Mammary epithelial cell (primary cell): ENCODE measurements at regions of chr12 and their contacts with region 1.

Region 1: DNA sequence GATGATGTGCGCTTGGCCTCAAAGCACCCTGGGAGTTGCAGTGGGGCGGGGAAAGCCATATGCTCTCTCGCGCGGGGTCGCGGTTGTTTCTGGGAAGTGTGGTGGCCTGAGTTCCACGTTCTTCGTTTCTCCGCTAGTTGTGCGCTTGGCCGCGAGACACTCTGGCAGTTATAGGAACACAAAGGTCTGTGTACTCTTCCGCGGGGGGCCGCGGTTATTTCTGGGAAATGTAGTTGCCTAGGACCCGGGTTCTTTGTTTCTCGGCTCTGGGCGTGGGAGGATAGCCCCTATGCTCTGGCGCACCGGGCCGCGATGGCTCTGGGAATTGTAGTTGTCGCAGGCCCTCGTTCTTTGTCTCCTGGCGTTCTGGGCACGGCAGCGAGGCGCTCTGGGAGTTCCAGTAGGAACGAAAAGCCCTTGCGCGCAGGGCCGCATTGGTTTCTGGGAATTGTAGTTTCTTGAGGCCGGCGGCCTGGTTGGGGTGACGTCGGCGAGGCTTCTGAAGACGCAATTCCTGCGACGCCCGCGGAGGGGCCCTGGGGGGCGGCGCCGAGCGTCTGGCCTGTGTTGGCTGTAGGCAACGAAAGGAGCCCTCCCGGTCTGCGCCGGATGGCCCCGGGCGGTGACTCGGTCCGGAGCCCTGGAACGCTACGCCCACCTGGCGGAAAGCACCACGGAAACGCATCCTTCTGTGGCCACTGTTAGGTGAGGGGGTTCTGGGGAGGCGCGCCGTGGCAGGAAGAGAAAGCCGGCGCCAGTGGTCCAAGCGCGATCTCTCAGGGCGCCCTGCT is at the start of gene ZNF140:
- DNase-seq: peak; percentile 94
- H3K4me3 ChIP-seq: peak within 1 kb of the TSS; percentile 64 to 100 (median 72)
- H3K27ac ChIP-seq: peak within 1 kb of the TSS; percentile 86
- H3K4me1 ChIP-seq: peaks cover 5% of the 10 kb centered on the region
- H3K27me3 ChIP-seq: no peaks in the 10 kb centered on the region
- CTCF ChIP-seq: peak in 1 of 2 donors; percentile 33
- total RNA-seq, gene ZNF140: 15.7 to 31.3 TPM

Region 2: DNA sequence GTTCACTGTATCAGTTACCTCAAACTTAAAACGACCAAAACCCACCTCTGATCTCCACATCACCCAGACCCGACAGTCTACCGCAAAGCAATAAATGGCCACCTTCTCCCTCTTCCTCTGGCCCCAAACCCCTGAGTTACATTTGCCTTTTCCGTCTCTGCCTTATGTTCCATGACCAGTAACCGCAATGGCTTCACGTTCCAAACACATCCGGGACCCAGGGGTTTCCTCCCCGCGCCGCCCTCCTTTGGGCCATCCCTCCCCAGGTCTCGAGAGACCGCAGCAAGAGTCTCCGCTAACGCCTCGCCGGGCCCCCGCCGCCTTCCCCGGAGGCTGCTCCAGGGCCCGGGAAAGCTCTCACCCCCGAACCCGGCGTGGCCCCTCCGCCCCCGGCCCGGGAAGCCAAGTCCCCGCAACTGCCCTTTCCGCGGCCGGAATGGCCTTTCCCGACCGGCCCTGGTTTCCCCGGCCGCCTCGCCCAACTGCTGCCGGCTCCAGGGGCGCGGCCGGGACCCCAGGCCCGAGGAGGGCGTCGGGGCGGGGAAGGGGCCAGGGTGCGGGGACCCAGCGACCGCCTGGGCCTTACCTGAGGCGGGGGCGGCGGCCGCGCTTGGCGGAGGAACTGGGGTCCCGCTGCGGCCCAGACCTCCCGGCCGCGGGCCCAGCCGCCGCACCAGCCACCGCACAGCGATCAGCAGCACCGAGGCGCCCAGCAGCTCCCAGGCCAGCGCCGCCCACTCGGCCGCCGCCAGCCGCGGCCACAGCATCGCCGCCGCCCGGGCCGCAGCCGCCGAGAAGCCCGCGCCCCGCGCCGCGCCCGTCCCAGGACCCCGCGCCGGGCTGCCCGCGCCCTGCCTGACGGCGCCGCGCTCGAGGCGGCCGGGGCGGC is 319.3 kb before region 1 on chr12 and contains the start of gene ANKLE2:
- CTCF ChIA-PET with region 1: no interaction called
- dilution Hi-C with region 1: no loop called
- in situ Hi-C with region 1: no loop called
- intact Hi-C with region 1: loop called (anchors 1 kb)
- DNase-seq: peak; percentile 61
- H3K4me3 ChIP-seq: peak within 1 kb of the TSS; percentile 83 to 96 (median 94)
- H3K27ac ChIP-seq: peak within 1 kb of the TSS; percentile 100
- H3K4me1 ChIP-seq: peaks cover 12% of the 10 kb centered on the region
- H3K27me3 ChIP-seq: no peaks in the 10 kb centered on the region
- CTCF ChIP-seq: no peak
- total RNA-seq, gene ANKLE2: 90.9 to 163 TPM

Region 3: GRCh38 chr12:132972374-132972773 is 108.2 kb before region 1 on chr12:
- CTCF ChIA-PET with region 1: no interaction called
- dilution Hi-C with region 1: no loop called
- in situ Hi-C with region 1: no loop called
- intact Hi-C with region 1: no loop called
- DNase-seq: no peak
- H3K4me3 ChIP-seq: no peak overlapping the region
- H3K27ac ChIP-seq: no peak overlapping the region
- H3K4me1 ChIP-seq: no peaks in the 10 kb centered on the region
- H3K27me3 ChIP-seq: no peaks in the 10 kb centered on the region
- CTCF ChIP-seq: no peak

Region 4: DNA sequence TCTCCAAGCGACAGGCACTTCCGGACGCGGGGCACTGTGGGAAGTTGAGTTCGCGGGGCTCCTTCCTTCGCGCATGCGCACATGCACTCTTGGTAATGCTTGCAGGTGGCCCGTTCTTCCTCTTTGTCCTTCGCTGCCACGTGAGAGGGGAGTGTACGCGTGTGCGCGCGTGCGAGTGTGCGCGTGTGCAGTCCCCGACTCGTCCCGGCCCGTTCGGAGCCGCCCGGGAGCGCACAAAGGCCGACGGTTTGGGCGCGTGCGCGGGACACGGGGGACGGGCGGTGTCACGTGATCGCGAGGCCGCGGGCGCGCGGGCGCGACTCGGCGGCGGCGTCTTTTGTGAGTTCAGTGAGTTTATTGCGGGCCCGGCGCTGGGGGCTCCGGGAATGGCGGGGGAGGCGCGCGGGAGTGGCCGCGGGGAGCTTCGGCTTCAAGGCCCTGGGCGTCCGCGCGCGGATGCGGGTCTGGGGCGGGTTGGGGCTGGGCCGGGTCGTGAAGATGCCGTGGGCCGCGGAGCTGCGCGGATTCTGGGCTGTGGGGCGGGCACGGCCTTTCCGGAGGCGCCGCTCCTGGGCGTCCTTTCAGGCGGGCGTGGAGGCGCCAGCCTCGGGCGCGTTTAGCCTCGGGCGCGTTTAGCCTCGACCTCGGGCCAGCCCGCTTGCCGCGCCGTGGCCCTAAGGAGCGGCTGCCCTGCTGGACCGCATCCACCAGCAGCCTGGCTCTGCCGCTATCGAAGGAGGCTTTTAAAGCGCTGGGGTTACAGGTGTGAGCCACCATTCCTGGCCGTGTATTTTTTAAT is 43.2 kb before region 1 on chr12 and contains the start of gene ZNF84:
- CTCF ChIA-PET with region 1: no interaction called
- dilution Hi-C with region 1: no loop called
- in situ Hi-C with region 1: no loop called
- intact Hi-C with region 1: loop called (anchors 1 kb)
- DNase-seq: peak; percentile 99
- H3K4me3 ChIP-seq: peak within 1 kb of the TSS; percentile 64 to 95 (median 89)
- H3K27ac ChIP-seq: peak within 1 kb of the TSS; percentile 82
- H3K4me1 ChIP-seq: no peaks in the 10 kb centered on the region
- H3K27me3 ChIP-seq: no peaks in the 10 kb centered on the region
- CTCF ChIP-seq: no peak
- total RNA-seq, gene ZNF84: 18.9 to 21.5 TPM

Region 5: GRCh38 chr12:133130038-133130807 is 49.7 kb after region 1 on chr12 and contains the starts of genes ZNF10 and ZNF891:
- CTCF ChIA-PET with region 1: no interaction called
- dilution Hi-C with region 1: no loop called
- in situ Hi-C with region 1: no loop called
- intact Hi-C with region 1: loop called (anchors 1 kb)
- DNase-seq: peak; percentile 97
- H3K4me3 ChIP-seq: peak within 1 kb of the TSS; percentile 63 to 91 (median 84)
- H3K27ac ChIP-seq: peak within 1 kb of the TSS; percentile 73
- H3K4me1 ChIP-seq: no peaks in the 10 kb centered on the region
- H3K27me3 ChIP-seq: no peaks in the 10 kb centered on the region
- CTCF ChIP-seq: no peak
- total RNA-seq, gene ZNF10: 8.4 to 14.2 TPM
- total RNA-seq, gene ZNF891: 0.83 to 1.1 TPM

Region 6: DNA sequence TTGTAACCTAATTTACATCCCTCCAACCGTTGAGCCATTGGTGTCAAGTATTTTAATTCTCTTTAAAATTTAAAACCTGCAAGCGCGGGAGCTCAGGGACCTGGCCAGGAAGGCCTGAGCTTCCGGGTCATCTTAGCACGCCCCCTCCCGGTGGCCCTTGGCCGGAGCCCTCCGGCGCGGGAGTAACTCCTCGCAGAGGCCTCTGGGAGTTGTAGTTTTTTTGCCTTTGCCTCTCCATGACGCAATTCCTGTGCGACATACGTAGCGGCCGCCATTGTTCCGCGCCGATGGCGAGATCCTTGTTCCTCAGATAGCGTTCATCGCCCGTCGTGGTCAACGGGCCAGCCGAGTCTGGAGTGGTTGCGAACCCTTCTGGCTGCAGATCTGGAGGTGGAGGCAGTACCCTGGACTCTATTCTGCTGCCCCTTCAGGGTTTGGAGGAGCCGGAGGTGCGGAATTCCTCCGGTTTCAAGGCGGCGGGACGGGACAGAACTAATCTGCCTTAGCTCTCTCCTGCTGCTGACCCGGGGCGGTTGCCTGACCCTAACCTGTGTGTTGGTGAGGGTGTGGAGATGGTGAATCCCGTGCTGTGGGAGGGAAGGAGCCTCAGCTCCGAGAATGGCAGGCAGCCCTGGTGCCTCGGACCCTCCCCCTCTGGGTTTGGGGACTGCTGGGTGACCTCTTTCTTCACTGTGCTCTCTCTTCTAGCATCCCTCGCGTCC is 100.8 kb after region 1 on chr12 and contains the start of gene ZNF268:
- CTCF ChIA-PET with region 1: no interaction called
- dilution Hi-C with region 1: no loop called
- in situ Hi-C with region 1: no loop called
- intact Hi-C with region 1: loop called (anchors 1 kb)
- DNase-seq: peak; percentile 81
- H3K4me3 ChIP-seq: peak within 1 kb of the TSS; percentile 94 to 98 (median 97)
- H3K27ac ChIP-seq: peak within 1 kb of the TSS; percentile 66
- H3K4me1 ChIP-seq: peaks cover 3% of the 10 kb centered on the region
- H3K27me3 ChIP-seq: no peaks in the 10 kb centered on the region
- CTCF ChIP-seq: peak; percentile 67 to 80
- total RNA-seq, gene ZNF268: 15.9 to 29.5 TPM

Region 7: GRCh38 chr12:133235401-133236112 is 155.0 kb after region 1 on chr12 and contains the start of gene ANHX:
- CTCF ChIA-PET with region 1: no interaction called
- dilution Hi-C with region 1: no loop called
- in situ Hi-C with region 1: no loop called
- intact Hi-C with region 1: no loop called
- DNase-seq: no peak
- H3K4me3 ChIP-seq: no peak within 1 kb of the TSS
- H3K27ac ChIP-seq: no peak within 1 kb of the TSS
- H3K4me1 ChIP-seq: no peaks in the 10 kb centered on the region
- H3K27me3 ChIP-seq: no peaks in the 10 kb centered on the region
- CTCF ChIP-seq: no peak
- total RNA-seq, gene ANHX: not detected